Activated CD4-positive, alpha-beta T cell treated with anti-CD3 and anti-CD28 coated beads for 36 hours (primary cell): ENCODE measurements at regions of chr14 and their contacts with region 1.

Region 1: DNA sequence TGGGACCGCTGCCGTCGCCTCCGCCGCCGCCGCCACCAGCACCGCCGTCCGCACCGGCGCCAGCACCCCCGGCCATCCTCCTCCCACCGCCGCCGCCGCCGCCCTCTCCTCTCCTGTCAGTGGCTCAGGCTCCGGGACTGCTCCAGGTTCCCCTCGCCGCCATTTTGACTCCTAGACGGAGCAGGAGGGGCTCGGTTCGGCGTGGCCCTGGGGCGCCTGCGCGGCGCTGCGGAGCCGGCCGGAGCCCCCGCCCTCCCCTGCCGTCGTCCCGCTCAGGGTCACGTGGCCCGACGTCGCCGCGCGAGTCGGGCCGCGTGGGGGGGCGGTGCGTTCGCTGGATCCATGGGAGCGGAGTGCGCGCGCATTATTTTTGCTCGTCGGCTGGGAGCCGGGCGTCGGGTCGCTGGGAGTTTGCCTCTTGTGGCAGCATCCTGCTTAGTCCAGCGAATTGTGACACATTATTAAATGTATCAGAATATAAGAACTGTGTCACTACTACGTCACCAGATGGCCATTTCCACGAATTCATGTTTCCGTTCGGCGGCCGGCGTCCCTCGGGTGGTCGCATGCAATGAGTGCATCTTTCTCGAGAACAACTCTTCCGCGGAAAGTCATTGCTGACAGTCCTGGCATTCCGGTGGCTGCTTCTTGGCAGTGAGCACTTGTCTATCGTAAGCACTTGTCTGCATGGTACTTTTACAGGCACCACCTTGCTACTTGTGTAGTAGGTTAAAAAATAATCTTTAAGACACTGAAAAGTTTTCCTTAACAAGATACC is at the start of gene BTBD7:
- DNase-seq: peak; percentile 97
- ATAC-seq: peak; percentile 94
- H3K4me3 Mint-ChIP-seq: peak within 1 kb of the TSS; percentile 90
- H3K27ac Mint-ChIP-seq: peak within 1 kb of the TSS; percentile 88
- H3K4me1 Mint-ChIP-seq: peaks cover 46% of the 10 kb centered on the region
- H3K27me3 Mint-ChIP-seq: no peaks in the 10 kb centered on the region
- total RNA-seq, gene BTBD7: 6.5 to 9.5 TPM

Region 2: GRCh38 chr14:93184388-93185353 is 148.4 kb before region 1 on chr14 and contains the starts of genes LYSET and MOAP1:
- CTCF ChIA-PET with region 1: no interaction called
- POLR2A ChIA-PET with region 1: no interaction called
- intact Hi-C with region 1: loop called (anchors 1 to 2 kb)
- DNase-seq: peak; percentile 95
- ATAC-seq: peak; percentile 90
- H3K4me3 Mint-ChIP-seq: peak within 1 kb of the TSS; percentile 91
- H3K27ac Mint-ChIP-seq: peak within 1 kb of the TSS; percentile 93
- H3K4me1 Mint-ChIP-seq: peaks cover 40% of the 10 kb centered on the region
- H3K27me3 Mint-ChIP-seq: no peaks in the 10 kb centered on the region
- total RNA-seq, gene LYSET: 9.9 to 10.2 TPM
- total RNA-seq, gene MOAP1: 11.7 to 15.9 TPM

Region 3: DNA sequence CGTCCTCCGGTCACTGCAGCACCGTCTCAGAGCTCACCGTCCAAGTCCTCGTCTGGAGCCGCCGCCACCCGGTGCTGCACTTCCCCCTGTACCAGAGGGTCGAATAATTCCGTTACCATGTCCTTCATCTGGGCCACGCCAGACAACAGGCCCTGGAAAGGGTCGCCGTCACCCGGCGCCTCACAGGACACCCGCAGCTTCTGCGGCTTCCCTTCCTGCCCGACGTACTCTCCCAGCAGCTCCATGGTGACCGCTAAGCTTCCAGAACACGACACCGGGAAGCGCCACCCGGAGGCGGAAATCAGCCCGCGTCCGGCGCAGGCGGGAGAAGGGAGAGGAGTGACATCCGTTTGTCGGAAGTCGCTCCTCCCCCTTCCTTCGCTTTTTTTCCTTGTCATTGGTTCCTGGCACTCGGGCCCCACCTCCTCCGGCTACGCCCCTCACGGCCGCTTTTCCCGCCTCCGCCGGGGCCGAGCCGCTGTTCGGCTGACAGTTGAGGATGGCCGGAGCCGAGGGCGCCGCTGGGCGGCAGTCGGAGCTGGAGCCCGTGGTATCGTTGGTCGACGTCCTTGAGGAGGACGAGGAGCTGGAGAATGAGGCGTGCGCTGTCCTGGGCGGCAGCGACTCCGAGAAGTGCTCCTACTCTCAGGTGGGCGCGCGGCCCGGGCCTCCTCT is 126.1 kb before region 1 on chr14 and contains the starts of genes GON7 and UBR7:
- CTCF ChIA-PET with region 1: interaction called, 3 read pairs
- POLR2A ChIA-PET with region 1: no interaction called
- intact Hi-C with region 1: loop called (anchors 1 to 2 kb)
- DNase-seq: peak; percentile 94
- ATAC-seq: peak; percentile 94
- H3K4me3 Mint-ChIP-seq: peak within 1 kb of the TSS; percentile 96
- H3K27ac Mint-ChIP-seq: peak within 1 kb of the TSS; percentile 97
- H3K4me1 Mint-ChIP-seq: peaks cover 35% of the 10 kb centered on the region
- H3K27me3 Mint-ChIP-seq: no peaks in the 10 kb centered on the region
- total RNA-seq, gene GON7: 9.9 to 12.9 TPM
- total RNA-seq, gene UBR7: 36.5 to 39.9 TPM

Region 4: DNA sequence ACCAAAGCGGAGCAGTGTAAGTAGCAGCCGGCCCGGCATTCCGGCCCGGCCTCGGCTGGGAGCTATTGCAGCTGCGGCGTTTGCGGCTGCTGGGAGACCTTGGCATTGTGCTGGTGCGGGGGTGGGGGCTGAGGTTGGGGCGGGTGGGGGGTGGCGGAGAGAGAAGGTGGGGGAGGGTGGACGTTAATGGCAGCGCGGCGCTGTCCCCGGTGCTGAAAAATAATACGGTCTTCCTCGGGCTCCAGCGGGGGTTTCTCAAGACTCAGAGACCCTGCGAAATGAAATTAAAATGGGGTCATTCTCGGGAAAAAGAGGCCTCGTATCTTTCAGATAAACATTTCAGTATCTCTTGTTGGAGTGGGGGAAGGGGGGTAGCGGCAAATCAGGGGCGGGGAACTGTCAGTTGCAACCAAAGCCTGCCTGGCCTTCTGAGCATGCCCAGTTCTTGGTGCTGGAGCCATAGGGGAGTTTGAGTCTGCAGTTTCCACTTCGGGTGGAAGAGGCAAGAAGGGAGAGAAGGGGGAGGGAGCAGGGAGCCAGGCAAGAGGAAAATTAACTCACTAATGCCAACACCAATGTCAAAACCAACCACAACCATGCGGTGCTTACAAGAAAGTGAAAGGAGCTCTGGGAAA is 98.1 kb after region 1 on chr14:
- CTCF ChIA-PET with region 1: no interaction called
- POLR2A ChIA-PET with region 1: no interaction called
- intact Hi-C with region 1: no loop called
- DNase-seq: peak; percentile 29
- ATAC-seq: no peak
- H3K4me3 Mint-ChIP-seq: no peak overlapping the region
- H3K27ac Mint-ChIP-seq: no peak overlapping the region
- H3K4me1 Mint-ChIP-seq: no peaks in the 10 kb centered on the region
- H3K27me3 Mint-ChIP-seq: peaks cover 38% of the 10 kb centered on the region

Region 5: DNA sequence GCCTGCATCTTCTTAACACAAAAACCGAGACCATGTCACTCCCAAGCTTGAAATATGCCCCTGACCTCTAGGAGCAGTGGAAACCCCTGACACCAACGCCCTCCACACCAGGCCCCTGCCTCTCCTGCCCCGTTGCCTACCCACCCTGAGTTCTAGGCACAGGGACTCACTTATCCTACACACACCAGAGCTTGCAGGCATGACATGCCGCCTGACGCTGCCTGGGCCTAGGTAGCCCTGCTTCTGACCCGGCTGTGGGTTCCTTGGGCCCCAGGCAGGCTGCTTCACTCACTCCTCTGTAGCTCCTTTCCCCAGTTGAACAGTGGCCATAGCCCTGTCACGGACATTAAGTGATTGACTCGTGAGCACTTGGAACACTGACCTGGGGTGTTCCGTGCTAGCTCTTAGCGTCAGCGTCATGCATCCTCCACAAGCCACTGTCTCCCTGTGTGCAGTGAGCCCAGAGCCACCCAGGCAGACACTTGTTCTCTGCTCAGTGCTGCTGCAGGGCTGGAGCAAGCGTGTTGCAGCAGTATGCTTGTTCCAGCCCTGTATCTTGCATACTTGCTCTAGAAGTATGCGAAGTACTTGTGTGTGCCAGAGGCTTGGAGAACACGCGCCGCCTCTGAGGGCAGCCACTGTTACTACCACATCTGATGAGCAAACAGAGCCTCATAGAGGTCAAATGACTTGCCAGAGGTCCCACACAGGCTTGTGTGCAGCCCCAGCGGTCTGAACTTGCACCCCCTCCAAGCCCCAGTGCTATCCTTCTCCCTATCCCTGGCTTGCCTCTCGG is 708.7 kb after region 1 on chr14:
- CTCF ChIA-PET with region 1: no interaction called
- POLR2A ChIA-PET with region 1: interaction called, 11 read pairs
- intact Hi-C with region 1: no loop called
- DNase-seq: no peak
- ATAC-seq: no peak
- H3K4me3 Mint-ChIP-seq: no peak overlapping the region
- H3K27ac Mint-ChIP-seq: no peak overlapping the region
- H3K4me1 Mint-ChIP-seq: peaks cover 1% of the 10 kb centered on the region
- H3K27me3 Mint-ChIP-seq: no peaks in the 10 kb centered on the region